ENCODE measurements at regions of chr4 and their contacts with region 1.

Region 1: GRCh38 chr4:14837860-14838259 is 164.4 kb upstream of the CPEB2 start:
- DNase-seq: no peak
- H3K4me3 ChIP-seq: no peak overlapping the region
- H3K27ac ChIP-seq: no peak overlapping the region
- H3K4me1 ChIP-seq: no peaks in the 10 kb centered on the region
- H3K27me3 ChIP-seq: no peaks in the 10 kb centered on the region
- CTCF ChIP-seq: no peak
- POLR2A ChIP-seq: no peak

Region 2: GRCh38 chr4:14284018-14284417 is 553.8 kb before region 1 on chr4:
- intact Hi-C with region 1: no loop called
- DNase-seq: no peak
- H3K4me3 ChIP-seq: no peak overlapping the region
- H3K27ac ChIP-seq: no peak overlapping the region
- H3K4me1 ChIP-seq: no peaks in the 10 kb centered on the region
- H3K27me3 ChIP-seq: no peaks in the 10 kb centered on the region
- CTCF ChIP-seq: no peak
- POLR2A ChIP-seq: no peak

Region 3: DNA sequence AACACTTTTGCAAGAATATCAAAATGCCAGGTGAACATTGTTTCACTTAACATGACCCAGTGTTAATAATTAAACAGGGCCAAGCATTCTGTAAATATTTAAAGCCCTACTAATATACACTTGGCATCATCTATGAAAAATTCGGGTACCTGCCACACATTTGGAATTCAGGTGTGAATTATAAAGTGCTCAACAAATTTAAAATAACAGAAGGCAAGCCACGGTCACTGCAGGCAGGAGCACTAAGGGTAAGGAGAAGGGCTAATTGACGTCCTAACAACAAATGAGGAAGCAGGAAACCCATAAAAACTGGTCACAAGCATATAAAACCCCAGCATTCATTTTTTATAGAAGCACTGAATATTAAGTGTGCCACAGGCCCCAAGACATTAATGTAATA is 120.6 kb after region 1 on chr4:
- intact Hi-C with region 1: no loop called
- DNase-seq: no peak
- H3K4me3 ChIP-seq: no peak overlapping the region
- H3K27ac ChIP-seq: no peak overlapping the region
- H3K4me1 ChIP-seq: no peaks in the 10 kb centered on the region
- H3K27me3 ChIP-seq: no peaks in the 10 kb centered on the region
- CTCF ChIP-seq: no peak
- POLR2A ChIP-seq: no peak

Region 4: GRCh38 chr4:15649914-15650545 is 812.2 kb after region 1 on chr4:
- intact Hi-C with region 1: no loop called
- DNase-seq: no peak
- H3K4me3 ChIP-seq: no peak overlapping the region
- H3K27ac ChIP-seq: peak overlapping the region; percentile 99
- H3K4me1 ChIP-seq: peaks cover 85% of the 10 kb centered on the region
- H3K27me3 ChIP-seq: no peaks in the 10 kb centered on the region
- CTCF ChIP-seq: peak in 2 of 3 experiments; percentile 42 to 59
- POLR2A ChIP-seq: no peak

Region 5: GRCh38 chr4:16636912-16637630 is 1799.2 kb after region 1 on chr4:
- intact Hi-C with region 1: loop called (anchors 10 kb)
- DNase-seq: no peak
- H3K4me3 ChIP-seq: no peak overlapping the region
- H3K27ac ChIP-seq: no peak overlapping the region
- H3K4me1 ChIP-seq: no peaks in the 10 kb centered on the region
- H3K27me3 ChIP-seq: no peaks in the 10 kb centered on the region
- CTCF ChIP-seq: no peak
- POLR2A ChIP-seq: no peak

Measured in vagina (tissue), 2 donors.